ENCODE measurements at regions of chr7 and their contacts with region 1.

Region 1: GRCh38 chr7:19121977-19122588 is 4.6 kb upstream of the TWIST1 start:
- DNase-seq: no peak
- H3K4me3 ChIP-seq: no peak overlapping the region
- H3K27ac ChIP-seq: no peak overlapping the region
- H3K27me3 ChIP-seq: peaks cover 5 to 88% (median 53%) of the 10 kb centered on the region in 45 donors
- CTCF ChIP-seq: peak in 55 of 56 donors; percentile 17 to 78 (median 63)

Region 2: DNA sequence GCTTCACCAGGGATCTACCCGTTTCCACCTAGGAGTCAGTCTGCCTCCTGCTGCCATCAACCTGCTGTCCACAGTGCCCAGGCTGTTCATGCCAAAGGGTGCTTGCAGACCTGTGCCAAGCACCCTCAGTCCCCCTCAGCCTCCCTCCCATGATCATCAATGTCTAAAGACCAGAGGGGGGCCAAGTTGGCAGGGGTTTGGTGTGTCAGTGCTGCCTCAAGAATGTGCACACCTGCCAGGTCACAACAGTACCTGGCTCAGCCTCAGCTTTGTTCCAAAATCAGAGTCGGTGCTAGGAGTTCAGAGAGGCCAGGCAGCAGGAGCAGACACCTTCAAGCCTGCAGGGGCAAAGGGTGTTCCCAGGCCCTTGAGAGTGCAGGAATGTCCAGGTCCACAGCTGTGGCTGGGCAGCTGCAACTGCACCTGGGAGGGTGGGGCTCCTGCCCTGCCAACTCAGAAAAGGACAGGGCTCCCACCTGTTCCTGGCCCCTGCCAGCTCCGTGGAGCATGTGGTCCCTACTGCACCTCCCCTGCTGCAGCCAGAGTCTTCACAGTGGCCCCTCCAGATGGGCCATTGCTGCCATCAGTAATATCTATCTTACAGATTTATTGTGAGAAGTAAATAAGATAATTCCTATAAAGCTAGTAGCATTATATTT is 367.2 kb after region 1 on chr7:
- intact Hi-C with region 1: loop called in 1 of 2 experiments (anchors 10 kb)
- DNase-seq: peak in 1 of 10 donors; percentile 28
- H3K4me3 ChIP-seq: no peak overlapping the region
- H3K27ac ChIP-seq: no peak overlapping the region
- H3K27me3 ChIP-seq: peaks cover 0 to 4% (median 0%) of the 10 kb centered on the region in 45 donors
- CTCF ChIP-seq: no peak

Region 3: DNA sequence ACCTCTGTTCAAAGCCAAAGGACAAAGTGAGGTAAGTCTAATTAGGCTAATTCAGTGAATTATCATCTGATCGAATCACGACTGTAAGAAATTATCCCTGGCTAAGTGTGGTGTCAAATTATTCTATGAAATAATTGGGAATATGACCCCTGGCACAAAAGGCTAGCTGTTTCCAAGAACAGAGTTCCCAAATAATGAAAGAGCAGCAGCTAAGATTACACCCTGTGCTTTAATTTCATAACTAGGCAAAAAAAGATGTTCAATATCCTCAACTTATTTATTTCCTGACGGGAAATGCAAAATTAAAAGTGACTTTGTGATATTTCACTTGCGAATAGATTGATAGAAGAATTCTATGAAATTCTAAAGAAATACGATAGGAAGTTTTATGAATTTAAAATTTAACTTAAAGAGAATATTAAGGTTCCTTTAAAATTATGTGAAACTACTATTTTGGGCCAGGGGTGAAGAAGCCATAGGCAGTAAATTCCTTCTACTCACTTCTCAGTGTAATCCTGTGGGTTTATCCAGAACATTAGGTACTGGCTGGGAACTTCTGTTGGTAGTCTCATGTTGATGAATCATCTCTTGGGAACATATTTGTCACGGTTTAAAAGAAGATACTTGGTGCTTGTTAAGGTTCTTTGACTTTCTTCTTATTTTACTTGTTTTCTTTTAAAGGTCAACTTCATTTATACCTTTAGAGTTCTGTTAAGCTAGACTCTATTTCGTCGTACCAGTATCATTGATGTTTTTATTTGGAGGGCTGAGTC is 438.2 kb after region 1 on chr7:
- intact Hi-C with region 1: no loop called
- DNase-seq: no peak
- H3K4me3 ChIP-seq: no peak overlapping the region
- H3K27ac ChIP-seq: no peak overlapping the region
- H3K27me3 ChIP-seq: peaks cover 0 to under 1% (median 0%) of the 10 kb centered on the region in 45 donors
- CTCF ChIP-seq: no peak

Region 4: GRCh38 chr7:19665399-19666008 is 543.4 kb after region 1 on chr7:
- intact Hi-C with region 1: loop called in 1 of 2 experiments (anchors 10 kb)
- DNase-seq: no peak
- H3K4me3 ChIP-seq: no peak overlapping the region
- H3K27ac ChIP-seq: no peak overlapping the region
- H3K27me3 ChIP-seq: peaks cover 0 to 26% (median 0%) of the 10 kb centered on the region in 45 donors
- CTCF ChIP-seq: peak; percentile 52 to 85 (median 71)